ENCODE measurements at regions of chr16 and their contacts with region 1.

Region 1: DNA sequence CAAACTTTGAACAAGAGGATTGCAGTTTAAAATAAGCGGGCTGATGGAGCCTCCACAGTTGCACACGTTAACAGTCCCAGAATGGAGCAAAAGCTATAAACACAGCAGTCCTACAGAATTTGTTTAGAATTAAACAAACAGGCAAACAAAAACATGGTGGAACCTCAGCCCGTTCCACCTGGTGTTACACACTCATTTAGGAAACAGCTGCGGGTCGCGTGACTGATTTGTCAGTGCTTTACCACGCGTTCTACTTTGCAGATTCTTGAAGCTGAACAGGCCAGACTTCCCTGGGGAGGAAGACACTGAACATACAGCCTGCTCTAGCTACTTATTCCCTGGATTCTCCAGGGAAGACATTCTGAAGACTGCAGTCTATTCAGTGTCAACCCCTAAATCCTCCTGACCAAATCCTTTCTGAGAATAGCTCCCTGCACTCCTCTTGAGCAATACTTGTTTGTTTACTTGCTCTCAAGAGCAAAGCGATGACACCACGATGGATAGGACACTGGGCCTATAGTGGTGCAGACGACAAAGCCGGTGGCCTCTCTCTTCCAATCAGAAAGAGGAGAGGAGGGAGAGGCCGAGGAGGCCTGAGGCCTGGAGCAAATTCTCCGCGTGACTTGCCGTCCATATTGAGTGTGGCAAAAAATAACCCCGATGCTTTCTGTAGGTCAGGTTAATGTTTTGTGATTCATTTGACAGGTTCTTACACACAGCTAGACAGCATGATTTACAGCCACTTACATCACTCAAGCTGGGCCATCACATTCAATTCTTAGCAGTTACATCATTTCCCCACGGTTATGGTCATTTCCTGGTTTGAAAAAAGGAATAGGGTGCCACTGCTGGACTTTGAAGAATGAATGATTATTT is 4.0 kb upstream of the MAP1LC3B start:
- DNase-seq: peak; percentile 96
- ATAC-seq: peak; percentile 56
- H3K4me3 ChIP-seq: peak overlapping the region; percentile 19 to 39 (median 35)
- H3K4me3 Mint-ChIP-seq: peak overlapping the region; percentile 68
- H3K27ac ChIP-seq: peak overlapping the region; percentile 94 to 98
- H3K27ac Mint-ChIP-seq: peak overlapping the region; percentile 98
- H3K4me1 ChIP-seq: peaks cover 36 to 52% of the 10 kb centered on the region in 2 donors
- H3K4me1 Mint-ChIP-seq: peaks cover 50% of the 10 kb centered on the region
- H3K27me3 ChIP-seq: no peaks in the 10 kb centered on the region
- H3K27me3 Mint-ChIP-seq: no peaks in the 10 kb centered on the region
- CTCF ChIP-seq: no peak

Region 2: GRCh38 chr16:86554917-86555703 is 833.1 kb before region 1 on chr16 and contains the start of gene MTHFSD:
- CTCF ChIA-PET with region 1: no interaction called
- POLR2A ChIA-PET with region 1: no interaction called
- intact Hi-C with region 1: loop called (anchors 10 kb)
- DNase-seq: peak; percentile 95
- ATAC-seq: peak; percentile 97
- H3K4me3 ChIP-seq: peak within 1 kb of the TSS; percentile 78 to 98 (median 87)
- H3K4me3 Mint-ChIP-seq: peak within 1 kb of the TSS; percentile 95
- H3K27ac ChIP-seq: peak within 1 kb of the TSS; percentile 89 to 94
- H3K27ac Mint-ChIP-seq: peak within 1 kb of the TSS; percentile 95
- H3K4me1 ChIP-seq: peaks cover 6 to 16% of the 10 kb centered on the region in 2 donors
- H3K4me1 Mint-ChIP-seq: peaks cover 16% of the 10 kb centered on the region
- H3K27me3 ChIP-seq: peaks cover 0 to 7% (median 1%) of the 10 kb centered on the region in 4 experiments
- H3K27me3 Mint-ChIP-seq: peaks cover 3% of the 10 kb centered on the region
- CTCF ChIP-seq: no peak
- total RNA-seq, gene MTHFSD: 42.0 and 51.7 TPM in 2 replicates

Region 3: GRCh38 chr16:87108941-87109340 is 279.2 kb before region 1 on chr16:
- CTCF ChIA-PET with region 1: no interaction called
- POLR2A ChIA-PET with region 1: no interaction called
- intact Hi-C with region 1: no loop called
- DNase-seq: no peak
- ATAC-seq: no peak
- H3K4me3 ChIP-seq: no peak overlapping the region
- H3K4me3 Mint-ChIP-seq: no peak overlapping the region
- H3K27ac ChIP-seq: no peak overlapping the region
- H3K27ac Mint-ChIP-seq: no peak overlapping the region
- H3K4me1 ChIP-seq: no peaks in the 10 kb centered on the region
- H3K4me1 Mint-ChIP-seq: no peaks in the 10 kb centered on the region
- H3K27me3 ChIP-seq: no peaks in the 10 kb centered on the region
- H3K27me3 Mint-ChIP-seq: peaks cover 13% of the 10 kb centered on the region
- CTCF ChIP-seq: no peak

Region 4: GRCh38 chr16:87316923-87317749 is 71.0 kb before region 1 on chr16 and contains the start of gene C16orf95:
- CTCF ChIA-PET with region 1: interaction called, 47 read pairs
- POLR2A ChIA-PET with region 1: interaction called, 9 read pairs
- intact Hi-C with region 1: loop called (anchors 1 kb)
- DNase-seq: peak; percentile 97
- ATAC-seq: peak; percentile 89
- H3K4me3 ChIP-seq: peak within 1 kb of the TSS; percentile 73 to 99 (median 94)
- H3K4me3 Mint-ChIP-seq: peak within 1 kb of the TSS; percentile 96
- H3K27ac ChIP-seq: peak within 1 kb of the TSS; percentile 64 to 84
- H3K27ac Mint-ChIP-seq: peak within 1 kb of the TSS; percentile 97
- H3K4me1 ChIP-seq: peaks cover 8 to 10% of the 10 kb centered on the region in 2 donors
- H3K4me1 Mint-ChIP-seq: peaks cover 12% of the 10 kb centered on the region
- H3K27me3 ChIP-seq: no peaks in the 10 kb centered on the region
- H3K27me3 Mint-ChIP-seq: no peaks in the 10 kb centered on the region
- CTCF ChIP-seq: peak; percentile 61
- total RNA-seq, gene C16orf95: 2.3 and 2.5 TPM in 2 replicates

Region 5: GRCh38 chr16:87332150-87332549 is 56.0 kb before region 1 on chr16:
- CTCF ChIA-PET with region 1: no interaction called
- POLR2A ChIA-PET with region 1: no interaction called
- intact Hi-C with region 1: no loop called
- DNase-seq: no peak
- ATAC-seq: no peak
- H3K4me3 ChIP-seq: no peak overlapping the region
- H3K4me3 Mint-ChIP-seq: no peak overlapping the region
- H3K27ac ChIP-seq: no peak overlapping the region
- H3K27ac Mint-ChIP-seq: no peak overlapping the region
- H3K4me1 ChIP-seq: peaks cover 7 to 8% of the 10 kb centered on the region in 2 donors
- H3K4me1 Mint-ChIP-seq: peaks cover 8% of the 10 kb centered on the region
- H3K27me3 ChIP-seq: no peaks in the 10 kb centered on the region
- H3K27me3 Mint-ChIP-seq: no peaks in the 10 kb centered on the region
- CTCF ChIP-seq: no peak

Measured in B cell (primary cell).